ENCODE measurements at regions of chr6 and their contacts with region 1.

Region 1: DNA sequence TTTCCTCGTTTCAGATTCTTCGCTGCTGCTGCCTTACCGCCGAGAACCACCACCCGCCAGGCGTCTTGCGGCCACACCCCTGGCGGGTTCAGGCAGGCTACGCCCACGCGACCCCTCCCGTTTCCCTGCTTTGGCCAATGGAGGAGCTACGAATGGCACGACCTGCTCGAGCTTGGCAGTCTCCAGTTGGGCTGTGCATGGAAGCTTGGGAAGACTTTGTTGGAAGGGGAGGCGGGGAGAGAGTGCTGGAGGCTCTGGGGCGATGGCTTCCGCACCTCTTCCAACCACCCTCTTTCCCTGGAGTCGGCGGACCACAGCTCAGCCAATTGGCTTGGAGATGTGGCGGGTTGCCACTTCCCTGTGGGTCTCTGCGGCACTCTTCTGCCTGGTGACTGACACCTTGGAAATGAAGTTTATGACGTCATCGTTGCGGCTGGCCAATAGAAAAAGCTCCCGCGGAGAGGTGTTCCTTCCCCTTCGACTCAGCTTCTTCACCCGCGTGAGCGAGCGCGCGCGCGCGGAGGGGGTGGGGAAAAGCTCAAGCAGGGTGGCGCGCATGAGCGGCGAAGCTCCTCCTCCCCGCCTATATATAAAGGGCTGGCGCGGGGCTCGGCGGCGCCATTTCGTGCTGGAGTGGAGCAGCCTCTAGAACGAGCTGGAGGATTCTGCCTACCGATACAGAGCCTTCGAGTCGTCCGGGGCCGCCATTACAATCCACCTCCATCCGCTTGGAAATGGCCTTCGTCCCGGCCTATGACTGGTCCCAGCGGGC is 3.4 kb downstream of the BRD2 start:
- DNase-seq: peak; percentile 100
- ATAC-seq: peak; percentile 57
- H3K4me3 ChIP-seq: peak overlapping the region; percentile 82 to 95
- H3K27ac ChIP-seq: peak overlapping the region; percentile 97
- H3K4me1 ChIP-seq: peaks cover 11 to 60% of the 10 kb centered on the region in 2 experiments
- H3K27me3 ChIP-seq: no peaks in the 10 kb centered on the region
- CTCF ChIP-seq: no peak
- POLR2A ChIP-seq: peak; percentile 98
- RAD21 ChIP-seq: no peak

Region 2: DNA sequence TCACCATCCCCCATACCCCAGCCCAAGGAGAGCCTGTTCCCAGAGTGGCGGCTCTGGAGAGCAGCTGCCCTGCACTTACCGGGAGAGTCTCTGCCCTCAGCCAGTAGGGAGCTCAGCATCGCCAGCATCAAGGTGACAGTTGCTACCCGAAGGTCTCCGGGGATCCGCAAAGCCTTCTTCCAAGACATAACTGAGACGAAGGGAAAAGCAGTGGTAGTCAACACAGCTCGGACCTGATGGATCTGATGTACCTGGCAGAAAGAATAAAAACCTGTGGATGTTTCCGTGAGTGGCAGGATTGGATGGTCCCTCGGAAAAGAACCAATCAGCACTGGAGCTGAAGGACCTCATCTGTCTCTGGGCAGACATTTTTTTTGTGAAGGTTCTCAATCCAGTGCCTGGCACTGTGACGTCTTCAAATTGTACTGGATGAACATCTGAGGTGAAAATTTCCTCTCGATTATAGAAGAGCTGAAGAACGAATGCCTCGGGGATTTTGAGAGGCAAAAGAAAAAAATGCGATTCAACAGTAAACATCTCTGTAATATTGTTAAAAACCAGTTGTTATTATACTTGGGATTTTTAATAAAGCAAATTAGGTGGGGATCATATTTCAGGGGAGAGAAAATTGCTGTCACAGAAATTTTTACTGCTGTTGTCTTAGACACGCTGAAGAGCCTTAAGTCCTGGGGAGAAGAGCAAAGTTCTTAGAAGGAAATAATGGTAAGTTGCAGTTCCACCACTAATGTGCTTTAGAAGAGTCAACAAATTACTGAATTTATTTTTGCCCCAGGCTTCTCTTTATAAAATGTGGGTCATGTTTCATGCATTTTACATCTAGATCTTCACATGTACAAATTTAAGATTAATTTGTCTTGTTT is 305.1 kb before region 1 on chr6 and contains the start of gene HLA-DQB1:
- CTCF ChIA-PET with region 1: no interaction called
- POLR2A ChIA-PET with region 1: no interaction called
- RAD21 ChIA-PET with region 1: no interaction called
- intact Hi-C with region 1: no loop called
- DNase-seq: peak; percentile 75
- ATAC-seq: peak; percentile 99
- H3K4me3 ChIP-seq: peak within 1 kb of the TSS; percentile 37 to 52
- H3K27ac ChIP-seq: no peak within 1 kb of the TSS
- H3K4me1 ChIP-seq: no peaks in the 10 kb centered on the region
- H3K27me3 ChIP-seq: no peaks in the 10 kb centered on the region
- CTCF ChIP-seq: no peak
- POLR2A ChIP-seq: no peak
- RAD21 ChIP-seq: no peak
- total RNA-seq, gene HLA-DQB1: 2.1 TPM

Region 3: DNA sequence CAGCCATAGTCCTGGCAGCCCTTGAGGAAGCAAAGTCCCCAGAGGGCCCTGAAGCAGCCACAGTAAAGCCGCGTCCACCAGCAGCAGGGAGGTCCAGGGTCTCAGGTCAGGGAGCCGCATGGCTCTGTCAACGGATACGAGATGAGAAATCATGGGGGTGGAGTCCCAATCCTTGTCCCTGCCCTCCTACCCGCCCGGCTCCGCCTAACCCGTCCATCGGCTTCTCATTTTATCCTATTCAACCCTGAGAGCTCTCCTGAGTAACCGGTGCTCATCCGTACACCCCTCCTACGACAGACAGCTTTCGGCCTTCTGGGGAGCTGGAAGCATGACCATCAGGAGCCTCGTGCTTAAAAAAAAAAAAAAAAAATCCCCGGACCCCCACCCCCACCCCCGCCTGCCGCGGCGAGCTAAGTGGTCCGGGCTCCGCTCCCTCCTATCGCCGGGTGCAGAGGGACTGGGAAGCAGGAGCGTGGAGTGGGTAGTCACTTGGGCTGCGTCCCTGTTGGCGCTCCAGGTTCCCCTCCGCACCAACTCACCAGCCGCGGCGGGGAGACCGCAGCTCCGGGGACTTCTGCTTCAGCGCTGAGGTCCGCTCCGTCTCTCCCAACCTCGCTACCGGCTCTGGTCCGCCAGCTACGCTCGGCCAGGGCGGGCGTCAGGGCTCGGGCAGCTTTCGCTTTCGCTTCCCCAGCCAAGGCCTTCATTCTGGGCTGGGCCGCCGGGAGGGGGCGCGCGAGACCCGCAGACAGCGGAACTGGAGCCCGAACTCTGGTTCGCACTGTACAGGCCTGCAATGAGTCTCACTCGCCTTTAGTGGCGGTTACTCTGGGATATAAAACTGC is 133.4 kb before region 1 on chr6 and contains the start of gene TAP2:
- CTCF ChIA-PET with region 1: interaction called, 18 read pairs
- POLR2A ChIA-PET with region 1: interaction called, 22 read pairs
- RAD21 ChIA-PET with region 1: no interaction called
- intact Hi-C with region 1: no loop called
- DNase-seq: peak; percentile 79
- ATAC-seq: peak; percentile 92
- H3K4me3 ChIP-seq: peak within 1 kb of the TSS; percentile 83 to 84
- H3K27ac ChIP-seq: peak within 1 kb of the TSS; percentile 81
- H3K4me1 ChIP-seq: peaks cover 6 to 20% of the 10 kb centered on the region in 2 experiments; a peak in 3 of 4 replicates
- H3K27me3 ChIP-seq: no peaks in the 10 kb centered on the region
- CTCF ChIP-seq: peak; percentile 88 to 96 (median 91)
- POLR2A ChIP-seq: peak; percentile 84
- RAD21 ChIP-seq: peak; percentile 97
- total RNA-seq, gene TAP2: 59.9 TPM

Region 4: GRCh38 chr6:32868257-32868788 is 103.4 kb before region 1 on chr6:
- CTCF ChIA-PET with region 1: interaction called, 16 read pairs
- POLR2A ChIA-PET with region 1: interaction called, 17 read pairs
- RAD21 ChIA-PET with region 1: no interaction called
- intact Hi-C with region 1: no loop called
- DNase-seq: peak; percentile 63
- ATAC-seq: peak; percentile 88
- H3K4me3 ChIP-seq: no peak overlapping the region
- H3K27ac ChIP-seq: no peak overlapping the region
- H3K4me1 ChIP-seq: peaks cover 0 to 4% of the 10 kb centered on the region in 2 experiments; a peak in 1 of 4 replicates
- H3K27me3 ChIP-seq: no peaks in the 10 kb centered on the region
- CTCF ChIP-seq: peak; percentile 82 to 94 (median 93)
- POLR2A ChIP-seq: no peak
- RAD21 ChIP-seq: peak; percentile 93

Region 5: DNA sequence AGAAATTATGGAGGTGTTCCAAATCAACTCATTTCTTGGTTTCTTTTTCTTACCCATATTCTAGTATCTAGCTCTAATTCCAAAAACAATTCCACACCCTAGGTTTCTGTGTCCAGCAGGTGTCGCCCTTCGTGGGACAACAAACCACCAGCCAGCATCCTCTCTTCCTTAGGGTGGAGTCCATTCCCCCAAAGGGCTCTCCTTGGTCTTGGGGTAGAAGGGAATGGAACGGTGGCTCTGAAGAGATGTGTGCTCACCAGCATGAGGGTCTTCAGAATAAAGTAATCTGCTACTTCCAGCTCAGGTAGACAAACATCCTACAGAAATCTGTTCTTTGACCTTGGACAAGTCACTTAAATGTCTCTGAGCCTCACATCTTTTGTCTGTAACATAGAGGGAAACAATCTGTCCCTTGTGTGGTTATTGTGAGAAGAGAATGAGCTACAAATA is 38.1 kb before region 1 on chr6:
- CTCF ChIA-PET with region 1: interaction called, 13 read pairs
- POLR2A ChIA-PET with region 1: interaction called, 18 read pairs
- RAD21 ChIA-PET with region 1: no interaction called
- intact Hi-C with region 1: no loop called
- DNase-seq: peak; percentile 56
- ATAC-seq: peak; percentile 92
- H3K4me3 ChIP-seq: no peak overlapping the region
- H3K27ac ChIP-seq: no peak overlapping the region
- H3K4me1 ChIP-seq: no peaks in the 10 kb centered on the region; a peak in 1 of 4 replicates
- H3K27me3 ChIP-seq: no peaks in the 10 kb centered on the region
- CTCF ChIP-seq: peak; percentile 82 to 90 (median 90)
- POLR2A ChIP-seq: no peak
- RAD21 ChIP-seq: peak; percentile 74

Region 6: GRCh38 chr6:32984605-32985389 is 13.0 kb after region 1 on chr6:
- CTCF ChIA-PET with region 1: interaction called, 42 read pairs
- POLR2A ChIA-PET with region 1: interaction called, 227 read pairs
- RAD21 ChIA-PET with region 1: interaction called, 3 to 4 read pairs
- intact Hi-C with region 1: no loop called
- DNase-seq: peak; percentile 77
- ATAC-seq: peak; percentile 81
- H3K4me3 ChIP-seq: no peak overlapping the region
- H3K27ac ChIP-seq: no peak overlapping the region
- H3K4me1 ChIP-seq: no peaks in the 10 kb centered on the region
- H3K27me3 ChIP-seq: no peaks in the 10 kb centered on the region
- CTCF ChIP-seq: peak; percentile 84 to 95 (median 90)
- POLR2A ChIP-seq: no peak
- RAD21 ChIP-seq: peak; percentile 98

Region 7: GRCh38 chr6:33317669-33318425 is 346.1 kb after region 1 on chr6 and contains the start of gene ZBTB22:
- CTCF ChIA-PET with region 1: no interaction called
- POLR2A ChIA-PET with region 1: interaction called, 13 read pairs
- RAD21 ChIA-PET with region 1: no interaction called
- intact Hi-C with region 1: no loop called
- DNase-seq: peak; percentile 98
- ATAC-seq: peak; percentile 82
- H3K4me3 ChIP-seq: peak within 1 kb of the TSS; percentile 55 to 63
- H3K27ac ChIP-seq: peak within 1 kb of the TSS; percentile 68
- H3K4me1 ChIP-seq: peaks cover 36 to 66% of the 10 kb centered on the region in 2 experiments
- H3K27me3 ChIP-seq: no peaks in the 10 kb centered on the region
- CTCF ChIP-seq: no peak
- POLR2A ChIP-seq: no peak
- RAD21 ChIP-seq: no peak
- total RNA-seq, gene ZBTB22: 11.7 TPM

Region 8: GRCh38 chr6:33356295-33356694 is 384.5 kb after region 1 on chr6:
- CTCF ChIA-PET with region 1: no interaction called
- POLR2A ChIA-PET with region 1: no interaction called
- RAD21 ChIA-PET with region 1: no interaction called
- intact Hi-C with region 1: no loop called
- DNase-seq: no peak
- ATAC-seq: no peak
- H3K4me3 ChIP-seq: no peak overlapping the region
- H3K27ac ChIP-seq: no peak overlapping the region
- H3K4me1 ChIP-seq: no peaks in the 10 kb centered on the region
- H3K27me3 ChIP-seq: peaks cover 17% of the 10 kb centered on the region; the same call in 1 of the 2 replicates
- CTCF ChIP-seq: no peak
- POLR2A ChIP-seq: no peak
- RAD21 ChIP-seq: no peak

Measured in HCT116 (cell line).